Astrocyte of the cerebellum (primary cell): ENCODE measurements at regions of chr3 and their contacts with region 1.

Region 1: DNA sequence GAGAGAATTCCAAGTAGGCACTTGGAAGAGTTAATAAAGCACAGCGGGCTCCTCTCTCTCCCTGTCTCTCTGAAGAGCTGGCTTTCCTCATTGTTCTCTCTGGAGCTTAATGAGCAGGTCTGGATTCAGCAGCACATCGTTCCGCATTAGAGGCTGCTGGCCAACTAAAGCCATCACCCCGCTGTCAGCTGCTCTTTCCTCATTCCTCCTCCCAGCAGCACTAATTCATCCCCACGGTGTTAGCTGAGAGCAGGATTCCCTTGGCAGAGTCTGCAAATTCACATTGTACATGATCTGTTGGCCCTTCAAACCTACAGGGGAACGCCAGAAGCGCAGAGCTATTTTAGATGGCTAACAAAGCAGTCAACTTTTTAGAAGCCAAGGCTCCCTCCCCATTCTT is 44.2 kb downstream of the SGO1 start:
- DNase-seq: peak; percentile 80
- H3K4me3 ChIP-seq: no peak overlapping the region
- CTCF ChIP-seq: peak; percentile 10

Region 2: GRCh38 chr3:20091331-20091730 is 50.5 kb before region 1 on chr3:
- in situ Hi-C with region 1: loop called (anchors 5 kb)
- DNase-seq: no peak
- H3K4me3 ChIP-seq: no peak overlapping the region
- CTCF ChIP-seq: no peak